Caco-2 (cell line): ENCODE measurements at regions of chr15 and their contacts with region 1.

Region 1: GRCh38 chr15:40825661-40826088 is 2.8 kb downstream of the PPP1R14D start:
- DNase-seq: peak; percentile 81 to 84
- H3K4me3 ChIP-seq: no peak overlapping the region
- H3K4me3 Mint-ChIP-seq: peak overlapping the region; percentile 59
- H3K27ac Mint-ChIP-seq: peak overlapping the region; percentile 65
- H3K4me1 ChIP-seq: peaks cover 59% of the 10 kb centered on the region
- H3K4me1 Mint-ChIP-seq: peaks cover 37% of the 10 kb centered on the region
- H3K27me3 ChIP-seq: no peaks in the 10 kb centered on the region
- H3K27me3 Mint-ChIP-seq: no peaks in the 10 kb centered on the region
- CTCF ChIP-seq: no peak

Region 2: DNA sequence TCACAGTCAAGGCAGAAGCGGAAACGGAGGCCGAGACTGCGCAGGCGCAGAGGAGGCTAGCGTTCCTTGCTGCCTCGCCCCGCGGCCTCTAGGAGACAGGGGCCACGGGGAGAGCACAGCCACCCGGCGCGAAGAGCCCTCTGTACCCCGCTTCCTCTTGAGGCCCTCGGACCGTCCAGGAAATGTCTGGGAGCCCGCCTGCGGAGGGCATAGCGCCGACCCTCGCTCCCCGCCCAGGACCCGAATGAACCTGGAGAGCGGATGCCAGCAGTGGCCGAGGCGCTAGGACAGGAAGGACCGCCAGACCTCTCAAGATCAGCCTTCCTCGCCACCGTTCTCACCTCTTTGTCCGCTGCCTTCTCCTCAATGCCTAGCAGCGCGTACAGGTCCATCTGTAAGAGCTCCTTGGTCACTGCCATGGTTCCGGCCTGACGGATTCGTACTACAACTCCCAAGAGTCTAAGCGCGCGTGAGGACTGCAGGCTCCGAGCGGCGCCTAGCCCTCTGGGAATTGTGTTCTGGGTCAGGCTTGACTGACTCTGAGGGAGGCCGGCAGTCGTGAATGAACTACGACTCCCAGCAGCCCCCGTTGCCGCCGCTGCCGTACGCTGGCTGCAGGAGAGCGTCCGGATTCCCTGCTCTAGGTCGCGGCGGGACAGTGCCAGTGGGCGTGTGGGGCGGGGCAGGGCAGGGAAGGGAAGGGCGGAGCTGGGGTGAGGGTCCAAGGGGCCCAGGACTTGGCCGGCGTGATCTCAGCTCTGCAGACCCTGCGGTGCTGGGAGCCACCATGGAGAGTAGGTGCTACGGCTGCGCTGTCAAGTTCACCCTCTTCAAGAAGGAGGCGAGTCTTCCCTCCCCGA is 18.4 kb before region 1 on chr15 and contains the starts of genes DNAJC17 and ZFYVE19:
- CTCF ChIA-PET with region 1: no interaction called
- POLR2A ChIA-PET with region 1: interaction called, 3 read pairs
- intact Hi-C with region 1: loop called (anchors 1 kb)
- DNase-seq: peak; percentile 96 to 97
- H3K4me3 ChIP-seq: peak within 1 kb of the TSS; percentile 88
- H3K4me3 Mint-ChIP-seq: peak within 1 kb of the TSS; percentile 95
- H3K27ac Mint-ChIP-seq: peak within 1 kb of the TSS; percentile 94
- H3K4me1 ChIP-seq: 0 out of 2 replicates have a peak, but pooled peaks cover 4% of the 10 kb centered on the region
- H3K4me1 Mint-ChIP-seq: no peaks in the 10 kb centered on the region
- H3K27me3 ChIP-seq: no peaks in the 10 kb centered on the region
- H3K27me3 Mint-ChIP-seq: no peaks in the 10 kb centered on the region
- CTCF ChIP-seq: no peak
- total RNA-seq, gene DNAJC17: 26.3 and 30.1 TPM in 2 replicates
- total RNA-seq, gene ZFYVE19: 26.7 and 26.9 TPM in 2 replicates

Region 3: DNA sequence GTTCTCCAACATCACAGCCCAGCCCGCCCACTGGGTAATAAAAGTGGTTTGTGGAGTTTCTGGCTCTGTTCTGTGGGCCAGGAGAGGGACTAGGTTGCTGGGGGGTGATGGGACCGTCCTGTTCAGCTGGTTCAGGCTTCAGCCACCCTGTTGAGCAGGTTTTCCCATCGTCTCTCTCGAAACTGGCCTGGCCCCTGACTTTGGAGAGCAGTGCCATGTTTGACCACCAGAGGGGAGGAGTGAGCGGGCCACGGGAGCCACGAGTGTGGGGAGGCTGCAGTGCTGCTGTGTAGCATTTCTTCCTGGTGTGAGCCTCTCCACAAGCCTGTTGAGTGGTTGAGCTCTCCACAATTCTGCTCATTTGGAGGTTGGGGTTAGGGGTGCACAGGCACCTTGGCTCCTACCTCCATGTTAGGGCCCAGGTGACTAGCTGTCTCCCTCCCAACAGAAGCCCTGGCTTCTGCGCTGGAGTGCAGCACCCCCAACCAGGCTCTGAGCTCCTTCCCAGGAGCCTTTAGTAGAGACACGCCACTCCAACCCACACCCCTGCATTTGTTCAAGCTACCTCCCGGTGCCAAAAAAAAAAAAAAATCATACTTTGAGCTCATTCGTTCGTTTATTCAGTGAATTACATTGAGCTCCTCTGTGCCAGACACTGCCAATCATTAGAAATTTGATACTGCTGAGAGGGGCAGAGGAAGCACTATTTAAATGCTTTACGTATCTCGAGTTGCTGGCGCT is 32.1 kb after region 1 on chr15:
- CTCF ChIA-PET with region 1: interaction called, 5 read pairs
- POLR2A ChIA-PET with region 1: no interaction called
- intact Hi-C with region 1: loop called (anchors 1 kb)
- DNase-seq: peak; percentile 92 to 96
- H3K4me3 ChIP-seq: no peak overlapping the region
- H3K4me3 Mint-ChIP-seq: peak overlapping the region; percentile 56
- H3K27ac Mint-ChIP-seq: peak overlapping the region; percentile 86
- H3K4me1 ChIP-seq: peaks cover 24% of the 10 kb centered on the region
- H3K4me1 Mint-ChIP-seq: peaks cover 39% of the 10 kb centered on the region
- H3K27me3 ChIP-seq: no peaks in the 10 kb centered on the region
- H3K27me3 Mint-ChIP-seq: no peaks in the 10 kb centered on the region
- CTCF ChIP-seq: peak; percentile 89 to 94

Region 4: GRCh38 chr15:40960926-40961325 is 135.3 kb after region 1 on chr15:
- CTCF ChIA-PET with region 1: no interaction called
- POLR2A ChIA-PET with region 1: no interaction called
- intact Hi-C with region 1: no loop called
- DNase-seq: peak; percentile 20 to 62
- H3K4me3 ChIP-seq: no peak overlapping the region
- H3K4me3 Mint-ChIP-seq: no peak overlapping the region
- H3K27ac Mint-ChIP-seq: no peak overlapping the region
- H3K4me1 ChIP-seq: no peaks in the 10 kb centered on the region
- H3K4me1 Mint-ChIP-seq: peaks cover 16% of the 10 kb centered on the region
- H3K27me3 ChIP-seq: no peaks in the 10 kb centered on the region
- H3K27me3 Mint-ChIP-seq: no peaks in the 10 kb centered on the region
- CTCF ChIP-seq: no peak